Esophagus muscularis mucosa (tissue), 4 donors: ENCODE measurements at regions of chr6 and their contacts with region 1.

Region 1: GRCh38 chr6:41779793-41780545 is at the start of gene FRS3:
- DNase-seq: peak; percentile 99
- H3K4me3 ChIP-seq: peak within 1 kb of the TSS; percentile 71 to 88 (median 78)
- H3K27ac ChIP-seq: peak within 1 kb of the TSS; percentile 83 to 90 (median 88)
- H3K4me1 ChIP-seq: peaks cover 33 to 66% (median 49%) of the 10 kb centered on the region in 4 donors
- H3K27me3 ChIP-seq: no peaks in the 10 kb centered on the region
- CTCF ChIP-seq: peak; percentile 92 to 97 (median 93)
- EP300 ChIP-seq: no peak
- POLR2A ChIP-seq: no peak
- total RNA-seq, gene FRS3: 5.0 to 9.9 (median 6.7) TPM

Region 2: DNA sequence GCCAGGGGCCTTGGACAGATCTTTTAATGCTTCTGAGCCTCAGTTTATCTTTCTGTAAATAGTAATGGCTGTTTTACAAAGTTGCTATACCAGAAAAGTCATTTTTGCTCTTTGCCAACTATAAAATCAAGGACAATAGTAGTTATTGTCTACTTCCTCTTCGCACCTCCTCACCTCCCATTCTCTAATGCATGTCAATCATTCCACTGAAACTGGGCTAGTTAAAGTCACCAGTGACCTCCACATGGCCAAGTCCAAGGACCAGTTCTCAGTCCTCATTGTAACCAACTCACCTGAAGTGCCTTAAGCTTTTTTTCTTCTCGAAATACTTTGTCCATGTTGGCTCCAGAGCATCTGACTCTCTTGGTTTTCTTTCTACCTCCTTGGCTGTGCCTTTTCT is 393.4 kb before region 1 on chr6:
- intact Hi-C with region 1: no loop called
- DNase-seq: no peak
- H3K4me3 ChIP-seq: no peak overlapping the region
- H3K27ac ChIP-seq: no peak overlapping the region
- H3K4me1 ChIP-seq: no peaks in the 10 kb centered on the region
- H3K27me3 ChIP-seq: peaks cover 0 to 28% (median 0%) of the 10 kb centered on the region in 4 donors
- CTCF ChIP-seq: no peak
- EP300 ChIP-seq: no peak
- POLR2A ChIP-seq: no peak

Region 3: GRCh38 chr6:41705996-41706835 is 73.8 kb before region 1 on chr6:
- intact Hi-C with region 1: loop called (anchors 10 kb)
- DNase-seq: no peak
- H3K4me3 ChIP-seq: peak overlapping the region; percentile 0 to 24 (median 4)
- H3K27ac ChIP-seq: peak overlapping the region; percentile 77 to 88 (median 82)
- H3K4me1 ChIP-seq: peaks cover 58 to 79% (median 72%) of the 10 kb centered on the region in 4 donors
- H3K27me3 ChIP-seq: no peaks in the 10 kb centered on the region
- CTCF ChIP-seq: peak; percentile 73 to 82 (median 73)
- EP300 ChIP-seq: no peak
- POLR2A ChIP-seq: no peak

Region 4: DNA sequence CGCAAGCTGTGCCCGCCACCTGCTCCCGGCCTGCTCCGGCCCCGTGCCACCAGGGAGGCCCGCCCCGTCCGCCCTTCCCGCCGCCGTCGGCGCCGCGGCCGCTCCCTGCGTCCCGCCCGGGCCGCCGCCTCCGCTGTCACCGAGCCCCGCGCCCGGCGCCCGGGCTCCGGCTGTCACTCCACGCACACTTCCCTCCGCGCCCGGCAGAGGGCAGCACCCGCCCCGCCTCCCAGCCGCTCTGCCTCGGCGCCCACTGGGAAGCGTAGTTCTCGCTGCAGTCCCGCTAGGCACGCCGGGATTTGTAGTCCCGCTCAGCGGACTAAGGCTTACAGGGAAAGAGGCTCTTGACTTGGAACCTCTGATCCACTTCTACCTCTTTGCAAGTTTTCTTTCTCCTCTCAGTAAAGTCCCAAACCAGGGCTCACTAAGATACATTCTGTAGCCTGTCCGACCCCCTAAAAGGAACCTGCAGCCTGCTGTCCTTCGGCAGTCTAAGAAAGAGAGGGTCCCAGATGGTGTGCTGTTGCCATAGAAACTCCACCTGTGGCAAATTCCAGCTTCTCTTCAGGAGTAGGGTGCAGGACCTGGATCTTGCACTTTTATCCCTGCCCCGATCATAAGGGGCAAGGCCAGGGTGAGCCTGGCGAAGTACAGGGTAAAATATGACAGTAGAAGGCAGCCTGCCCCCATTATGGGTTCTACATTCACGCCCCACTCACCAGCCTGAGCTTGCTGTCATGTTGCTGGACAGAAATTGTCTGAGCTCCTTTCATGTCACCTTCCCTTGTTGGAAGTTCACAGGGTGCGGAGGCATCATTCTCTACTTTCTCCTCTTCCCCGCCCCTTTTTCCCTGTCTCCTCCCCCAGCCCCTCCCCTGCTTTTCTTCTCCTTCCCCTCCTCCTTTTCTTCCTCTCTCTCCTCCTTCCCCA is 44.3 kb before region 1 on chr6 and contains the start of gene TFEB:
- intact Hi-C with region 1: loop called (anchors 5 kb)
- DNase-seq: peak; percentile 97
- H3K4me3 ChIP-seq: peak within 1 kb of the TSS; percentile 90 to 98 (median 97)
- H3K27ac ChIP-seq: peak within 1 kb of the TSS; percentile 97 to 99 (median 98)
- H3K4me1 ChIP-seq: peaks cover 36 to 43% (median 40%) of the 10 kb centered on the region in 4 donors
- H3K27me3 ChIP-seq: peaks cover 0 to 6% (median 0%) of the 10 kb centered on the region in 4 donors
- CTCF ChIP-seq: peak; percentile 92 to 99 (median 92)
- EP300 ChIP-seq: no peak
- POLR2A ChIP-seq: no peak
- total RNA-seq, gene TFEB: 24.2 to 46.7 (median 33.1) TPM

Region 5: GRCh38 chr6:42066156-42066555 is 286.2 kb after region 1 on chr6:
- intact Hi-C with region 1: no loop called
- DNase-seq: no peak
- H3K4me3 ChIP-seq: no peak overlapping the region
- H3K27ac ChIP-seq: no peak overlapping the region
- H3K4me1 ChIP-seq: peaks cover 0 to 5% (median 0%) of the 10 kb centered on the region in 4 donors
- H3K27me3 ChIP-seq: no peaks in the 10 kb centered on the region
- CTCF ChIP-seq: no peak
- EP300 ChIP-seq: no peak
- POLR2A ChIP-seq: no peak